ENCODE measurements at regions of chr10 and their contacts with region 1.

Region 1: GRCh38 chr10:103476046-103476995 is 2.7 kb downstream of the CALHM3 start:
- DNase-seq: no peak
- ATAC-seq: peak; percentile 77
- H3K4me3 ChIP-seq: no peak overlapping the region
- H3K27ac ChIP-seq: no peak overlapping the region
- H3K4me1 ChIP-seq: peaks cover 21 to 41% of the 10 kb centered on the region in 2 experiments
- H3K27me3 ChIP-seq: no peaks in the 10 kb centered on the region
- CTCF ChIP-seq: peak; percentile 67 to 84 (median 76)
- POLR2A ChIP-seq: no peak
- RAD21 ChIP-seq: peak; percentile 87

Region 2: DNA sequence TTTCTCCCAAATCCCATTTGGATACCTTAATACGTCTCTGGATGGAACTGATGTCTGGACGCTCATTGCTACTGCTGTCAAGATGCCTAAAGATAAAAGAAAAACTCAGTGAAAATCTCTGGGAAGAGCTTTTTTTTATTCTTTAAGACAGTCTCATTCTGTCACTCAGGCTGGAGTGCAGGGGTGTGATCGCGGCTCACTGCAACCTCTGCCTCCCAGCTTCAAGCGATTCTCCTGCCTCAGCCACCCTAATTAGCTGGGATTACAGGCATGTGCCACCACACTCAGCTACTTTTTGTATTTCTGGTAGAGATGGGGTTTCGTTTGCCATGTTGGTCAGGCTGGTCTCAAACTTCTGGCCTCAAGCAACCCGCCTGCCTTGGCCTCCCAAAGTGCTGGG is 385.4 kb before region 1 on chr10:
- CTCF ChIA-PET with region 1: no interaction called
- POLR2A ChIA-PET with region 1: no interaction called
- RAD21 ChIA-PET with region 1: no interaction called
- intact Hi-C with region 1: loop called (anchors 5 kb)
- DNase-seq: no peak
- ATAC-seq: no peak
- H3K4me3 ChIP-seq: no peak overlapping the region
- H3K27ac ChIP-seq: no peak overlapping the region
- H3K4me1 ChIP-seq: no peaks in the 10 kb centered on the region
- H3K27me3 ChIP-seq: no peaks in the 10 kb centered on the region
- CTCF ChIP-seq: no peak
- POLR2A ChIP-seq: no peak
- RAD21 ChIP-seq: no peak

Region 3: GRCh38 chr10:103451831-103452505 is 24.4 kb before region 1 on chr10 and contains the start of gene CALHM2:
- CTCF ChIA-PET with region 1: interaction called, 13 read pairs
- POLR2A ChIA-PET with region 1: interaction called, 3 read pairs
- RAD21 ChIA-PET with region 1: no interaction called
- intact Hi-C with region 1: no loop called
- DNase-seq: no peak
- ATAC-seq: peak; percentile 65
- H3K4me3 ChIP-seq: peak within 1 kb of the TSS; percentile 89 to 93
- H3K27ac ChIP-seq: peak within 1 kb of the TSS; percentile 83
- H3K4me1 ChIP-seq: peaks cover 11 to 55% of the 10 kb centered on the region in 2 experiments; a peak in 3 of 4 replicates
- H3K27me3 ChIP-seq: no peaks in the 10 kb centered on the region
- CTCF ChIP-seq: 0 out of 6 replicates have a peak, but pooled peaks of 1 of the 3 experiments have one; percentile 10
- POLR2A ChIP-seq: peak; percentile 35
- RAD21 ChIP-seq: no peak
- total RNA-seq, gene CALHM2: 46.1 TPM

Region 4: GRCh38 chr10:103463499-103463898 is 12.8 kb before region 1 on chr10:
- CTCF ChIA-PET with region 1: interaction called, 10 read pairs
- POLR2A ChIA-PET with region 1: no interaction called
- RAD21 ChIA-PET with region 1: no interaction called
- intact Hi-C with region 1: no loop called
- DNase-seq: no peak
- ATAC-seq: no peak
- H3K4me3 ChIP-seq: no peak overlapping the region
- H3K27ac ChIP-seq: no peak overlapping the region
- H3K4me1 ChIP-seq: no peaks in the 10 kb centered on the region; a peak in 1 of 4 replicates
- H3K27me3 ChIP-seq: no peaks in the 10 kb centered on the region
- CTCF ChIP-seq: no peak
- POLR2A ChIP-seq: no peak
- RAD21 ChIP-seq: no peak

Region 5: DNA sequence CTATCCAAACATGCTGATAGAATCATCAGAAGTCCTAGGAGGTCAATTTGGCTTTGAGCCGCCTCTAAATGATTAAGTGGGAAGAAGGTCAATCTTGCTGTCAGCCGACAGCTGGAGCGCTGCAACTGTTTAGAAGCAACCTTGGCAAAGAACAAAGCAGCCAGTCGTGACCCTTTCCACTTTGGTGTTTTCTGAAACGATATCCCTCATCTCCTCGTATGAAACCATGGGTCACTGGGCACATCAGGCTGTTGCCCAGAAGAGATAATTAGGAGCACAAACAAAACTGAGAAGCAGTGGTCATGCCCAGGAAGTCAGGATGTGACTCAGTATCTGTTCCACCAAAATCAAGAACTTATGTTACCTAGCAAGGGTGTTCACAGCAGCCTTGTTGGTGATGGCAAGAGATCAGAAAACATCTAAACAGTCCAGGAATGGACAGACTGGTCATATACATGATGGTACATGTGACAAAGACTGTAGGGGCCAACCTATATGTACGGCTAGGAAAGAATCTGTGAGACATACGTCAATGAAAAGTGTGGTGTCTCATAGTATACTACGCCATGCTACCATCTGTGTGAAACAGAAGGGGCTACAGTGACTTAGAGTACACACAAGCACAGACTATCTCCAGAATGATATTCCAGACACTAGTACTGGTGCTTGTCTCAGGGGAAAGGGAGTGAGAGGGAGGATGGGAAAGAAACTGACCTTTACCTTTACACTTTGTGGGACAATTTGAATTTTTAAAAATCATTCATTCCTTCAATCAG is 419.3 kb after region 1 on chr10:
- CTCF ChIA-PET with region 1: no interaction called
- POLR2A ChIA-PET with region 1: no interaction called
- RAD21 ChIA-PET with region 1: no interaction called
- intact Hi-C with region 1: no loop called
- DNase-seq: peak; percentile 97
- ATAC-seq: peak; percentile 83
- H3K4me3 ChIP-seq: peak overlapping the region in 1 of 2 experiments; percentile 17; a peak in 2 of 4 replicates
- H3K27ac ChIP-seq: peak overlapping the region; percentile 84
- H3K4me1 ChIP-seq: peaks cover 87 to 92% of the 10 kb centered on the region in 2 experiments
- H3K27me3 ChIP-seq: no peaks in the 10 kb centered on the region
- CTCF ChIP-seq: no peak
- POLR2A ChIP-seq: no peak
- RAD21 ChIP-seq: no peak